ENCODE measurements at regions of chr19 and their contacts with region 1.

Region 1: DNA sequence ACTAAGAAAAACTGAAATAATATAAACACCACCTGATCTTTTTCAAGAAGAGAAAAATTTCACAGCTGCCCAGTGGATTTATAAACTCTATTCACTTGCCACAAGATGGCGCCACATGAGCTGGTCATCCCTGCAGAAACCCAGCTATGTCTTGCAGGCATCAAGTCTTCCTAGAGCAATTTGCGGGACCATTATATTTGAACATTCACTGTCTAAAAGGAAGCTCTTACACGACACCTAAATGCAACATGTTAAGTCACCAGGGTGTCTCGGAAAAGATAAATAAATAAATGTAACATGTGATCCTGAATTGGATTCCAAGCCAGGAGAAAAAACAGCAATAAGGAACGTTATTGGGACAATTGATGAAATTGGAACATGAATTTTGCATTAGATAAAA is 20.3 kb upstream of the AKT2 start:
- DNase-seq: peak; percentile 60
- H3K4me3 ChIP-seq: no peak overlapping the region
- CTCF ChIP-seq: peak; percentile 65

Region 2: DNA sequence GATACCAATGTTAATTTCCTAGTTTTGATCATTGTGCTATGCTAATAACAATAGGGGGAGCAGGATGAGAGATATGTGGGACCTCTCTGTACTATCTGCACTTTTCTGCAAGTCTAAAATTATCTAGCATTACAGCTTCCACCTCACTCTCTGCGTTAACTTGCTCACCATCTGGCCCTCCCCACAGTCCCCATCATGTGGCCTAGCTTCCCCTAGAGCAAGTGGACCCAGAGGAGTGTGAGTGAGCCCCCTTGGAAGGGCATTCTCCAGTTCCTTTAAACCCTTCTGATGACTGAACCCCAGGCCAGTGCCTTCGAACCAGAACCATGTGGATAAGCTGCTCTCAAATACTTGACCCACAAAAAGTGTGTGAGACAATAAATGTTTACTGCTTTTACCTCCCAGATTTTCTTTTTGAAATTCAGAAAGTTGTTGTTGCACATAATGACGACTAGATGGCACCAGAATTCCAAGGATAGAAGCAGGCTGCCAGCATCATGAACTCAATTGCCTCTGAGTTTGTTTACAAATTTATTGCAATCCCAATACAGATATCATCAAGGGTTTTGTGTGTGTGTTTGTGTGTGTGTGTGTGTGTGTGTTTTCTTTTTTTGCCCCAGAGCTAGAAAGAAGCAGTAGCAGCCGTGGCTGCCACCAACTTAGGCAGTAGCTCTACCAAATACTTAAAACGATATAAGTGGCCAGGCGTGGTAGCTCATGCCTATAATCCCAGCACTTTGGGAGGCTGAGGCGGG is 165.7 kb before region 1 on chr19:
- CTCF ChIA-PET with region 1: interaction called, 14 read pairs
- POLR2A ChIA-PET with region 1: no interaction called
- DNase-seq: no peak
- H3K4me3 ChIP-seq: no peak overlapping the region
- CTCF ChIP-seq: peak; percentile 52

Region 3: DNA sequence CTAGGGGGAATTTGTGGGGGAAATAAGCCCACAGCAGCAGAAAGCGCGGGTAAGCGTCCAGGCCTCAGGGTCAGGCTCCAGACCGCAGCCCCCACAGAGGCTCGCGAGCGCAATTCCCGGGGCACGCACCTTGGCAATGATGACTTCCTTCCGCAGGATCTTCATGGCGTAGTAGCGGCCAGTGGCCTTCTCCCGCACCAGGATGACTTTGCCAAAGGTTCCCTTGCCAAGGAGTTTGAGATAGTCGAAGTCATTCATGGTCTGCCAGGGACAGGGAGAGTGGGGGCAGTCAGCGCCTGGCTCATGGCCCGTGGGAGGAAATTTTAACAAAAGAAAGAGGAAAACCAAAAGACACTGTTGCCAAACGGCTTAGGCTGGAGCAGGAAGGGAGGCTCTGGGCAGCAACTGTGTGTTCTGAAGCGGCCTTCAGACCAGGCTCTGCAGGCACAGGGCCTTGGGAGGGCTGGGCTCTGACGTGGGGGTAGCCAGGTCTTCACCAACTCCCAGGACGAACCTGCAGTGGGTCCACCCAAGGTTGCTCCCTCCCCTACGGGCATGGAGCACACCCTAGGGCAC is 63.5 kb before region 1 on chr19:
- CTCF ChIA-PET with region 1: no interaction called
- POLR2A ChIA-PET with region 1: no interaction called
- DNase-seq: no peak
- H3K4me3 ChIP-seq: no peak overlapping the region
- CTCF ChIP-seq: no peak

Region 4: DNA sequence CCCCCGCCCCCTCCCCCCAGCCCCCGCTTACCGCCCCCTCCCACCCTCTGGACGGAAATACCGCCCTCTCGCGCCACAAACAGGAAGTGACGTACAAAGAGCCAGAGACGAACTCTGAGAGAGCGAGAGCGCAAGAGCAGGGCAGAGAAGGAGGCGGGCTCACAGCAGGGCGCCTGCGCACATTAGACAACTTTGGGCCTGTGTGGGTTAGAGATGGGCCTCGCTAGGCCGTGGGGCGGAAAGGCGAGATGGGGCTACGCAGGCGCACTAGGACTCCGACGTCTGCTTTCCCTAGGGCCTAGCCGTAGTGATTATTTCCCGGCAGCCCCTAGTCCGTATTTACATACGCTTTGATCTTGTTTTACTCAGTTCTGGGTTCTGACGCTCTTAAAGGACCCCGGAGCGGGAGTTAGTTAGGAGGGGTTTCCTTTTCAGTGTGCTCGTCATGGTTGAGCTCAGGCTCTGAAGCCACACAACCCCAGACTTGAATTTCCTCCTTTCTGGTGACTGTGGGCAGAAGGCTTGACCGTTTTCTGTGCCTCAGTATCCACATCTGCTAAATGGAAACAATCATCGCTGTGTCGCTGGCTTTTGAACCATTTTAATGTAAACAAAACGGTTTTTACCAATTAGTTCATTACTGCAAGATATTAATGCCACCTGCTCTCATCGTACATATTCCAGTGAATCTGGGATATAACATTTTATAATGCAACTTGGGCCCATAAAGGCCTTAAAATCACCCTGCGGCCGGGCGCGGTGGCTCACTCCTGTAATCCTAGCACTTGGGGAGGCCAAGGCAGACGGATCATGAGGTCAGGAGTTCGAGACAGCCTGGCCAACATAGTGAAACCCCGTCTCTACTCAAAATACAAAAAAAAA is 19.8 kb before region 1 on chr19:
- CTCF ChIA-PET with region 1: interaction called, 18 read pairs
- POLR2A ChIA-PET with region 1: no interaction called
- DNase-seq: peak; percentile 94
- H3K4me3 ChIP-seq: peak overlapping the region; percentile 85
- CTCF ChIP-seq: no peak

Region 5: DNA sequence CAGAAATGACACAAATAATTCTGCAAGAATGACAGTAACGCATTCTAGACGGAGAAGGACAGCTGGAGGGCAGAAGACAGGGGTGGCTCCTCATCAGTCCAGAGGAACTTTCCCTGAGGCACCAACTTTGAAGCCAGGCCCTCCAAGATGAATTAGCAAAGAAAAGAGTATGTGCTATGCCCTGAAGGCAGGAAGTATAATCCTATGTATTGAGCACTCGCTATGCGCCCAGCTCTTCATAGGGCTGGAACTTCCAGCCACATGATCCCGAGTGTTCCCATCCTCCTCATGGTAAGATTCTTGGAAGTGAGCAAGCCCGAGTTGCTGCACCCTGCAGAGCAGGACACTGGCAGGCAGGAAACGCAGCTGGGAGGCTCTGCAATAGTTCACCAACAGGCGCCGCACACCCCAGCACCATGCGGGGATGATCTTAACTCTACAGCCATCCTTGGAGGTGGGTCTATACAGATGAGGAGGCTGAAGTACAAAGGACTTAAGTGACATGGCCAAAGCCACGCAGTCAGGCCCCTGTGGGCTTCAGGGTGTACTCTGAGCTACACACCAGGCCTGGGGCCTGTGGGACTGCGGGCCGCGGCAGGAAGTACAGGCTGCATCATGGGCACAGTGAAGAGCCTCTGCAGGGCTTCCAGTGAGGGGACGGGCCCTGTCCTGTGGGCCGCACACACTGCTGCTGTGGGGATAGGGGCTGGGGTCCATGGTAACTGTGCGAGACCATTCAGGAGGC is 17.6 kb after region 1 on chr19:
- CTCF ChIA-PET with region 1: interaction called, 57 read pairs
- POLR2A ChIA-PET with region 1: no interaction called
- DNase-seq: no peak
- H3K4me3 ChIP-seq: no peak overlapping the region
- CTCF ChIP-seq: no peak

Region 6: DNA sequence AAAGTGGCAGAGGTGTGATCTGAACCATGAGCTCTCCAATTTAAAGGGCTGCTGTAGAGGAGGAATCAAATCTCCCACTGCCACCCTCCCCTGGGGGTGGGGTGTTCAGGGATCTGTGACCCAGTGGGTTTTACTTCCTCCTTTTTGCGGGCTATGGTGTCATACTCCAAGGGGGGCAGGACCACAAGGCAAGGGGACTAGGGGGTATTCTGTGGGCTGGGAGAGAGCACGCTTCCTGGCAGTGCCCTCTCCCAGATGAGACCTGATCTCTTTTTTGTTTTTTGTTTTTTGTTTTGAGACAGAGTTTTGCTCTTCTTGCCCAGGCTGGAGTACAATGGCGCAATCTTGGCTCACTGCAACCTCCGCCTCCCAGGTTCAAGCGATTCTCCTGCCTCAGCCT is 53.4 kb after region 1 on chr19:
- CTCF ChIA-PET with region 1: interaction called, 10 read pairs
- POLR2A ChIA-PET with region 1: no interaction called
- DNase-seq: no peak
- H3K4me3 ChIP-seq: no peak overlapping the region
- CTCF ChIP-seq: no peak

Region 7: GRCh38 chr19:40523322-40524047 is 218.1 kb after region 1 on chr19:
- CTCF ChIA-PET with region 1: interaction called, 13 read pairs
- POLR2A ChIA-PET with region 1: no interaction called
- DNase-seq: no peak
- H3K4me3 ChIP-seq: no peak overlapping the region
- CTCF ChIP-seq: peak; percentile 78

Region 8: GRCh38 chr19:40598121-40598917 is 292.9 kb after region 1 on chr19:
- CTCF ChIA-PET with region 1: interaction called, 15 read pairs
- POLR2A ChIA-PET with region 1: no interaction called
- DNase-seq: no peak
- H3K4me3 ChIP-seq: peak overlapping the region; percentile 65
- CTCF ChIP-seq: peak; percentile 97